Activated naive CD4-positive, alpha-beta T cell treated with anti-CD3 and anti-CD28 coated beads for 36 hours (primary cell): ENCODE measurements at regions of chr15 and their contacts with region 1.

Region 1: DNA sequence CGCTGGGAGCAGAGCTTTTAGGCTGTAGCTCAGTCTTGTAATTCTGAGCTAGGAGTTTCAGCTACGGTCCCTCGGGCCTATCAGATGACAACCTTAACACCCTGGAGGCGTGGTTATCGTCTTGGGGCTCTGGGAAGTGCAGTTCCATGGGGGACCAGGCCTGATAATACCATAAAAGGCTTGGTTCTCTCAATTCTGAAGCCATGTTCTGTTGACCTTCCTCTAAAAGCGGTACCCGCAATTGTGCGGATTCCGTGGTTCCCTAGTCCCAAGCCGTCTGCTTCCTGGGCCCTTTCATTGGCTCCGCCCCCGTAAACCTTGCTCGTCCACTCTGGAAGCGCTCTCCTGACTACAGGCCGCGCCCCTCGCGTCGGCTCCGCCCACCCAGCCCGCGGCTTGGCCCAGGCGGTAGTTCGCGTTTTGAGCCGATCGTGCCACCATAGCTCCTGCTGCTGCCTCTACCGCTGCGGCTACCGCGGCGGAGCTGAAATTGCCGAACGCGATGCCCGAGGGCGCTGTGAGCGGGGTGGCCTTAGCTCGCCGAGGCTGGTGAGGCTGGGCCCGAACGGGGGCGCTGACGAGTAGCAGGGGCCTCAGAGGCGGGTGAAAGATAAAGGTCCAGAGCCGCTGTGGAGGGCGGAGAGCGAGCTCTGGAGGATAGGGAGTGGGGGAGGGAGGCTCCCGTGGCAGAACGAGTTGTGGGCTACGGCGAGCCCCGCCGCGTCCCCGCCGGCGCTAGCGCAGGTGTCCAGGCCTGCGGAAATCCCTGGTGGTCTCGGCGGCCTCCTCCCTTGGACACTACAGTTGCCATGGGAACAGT is at the start of gene MAPKBP1:
- DNase-seq: peak; percentile 98
- H3K4me3 Mint-ChIP-seq: peak within 1 kb of the TSS; percentile 85
- H3K27ac Mint-ChIP-seq: peak within 1 kb of the TSS; percentile 91
- H3K4me1 Mint-ChIP-seq: peaks cover 56% of the 10 kb centered on the region
- H3K27me3 Mint-ChIP-seq: no peaks in the 10 kb centered on the region
- total RNA-seq, gene MAPKBP1: 13.8 to 13.9 TPM

Region 2: GRCh38 chr15:41557673-41558399 is 216.4 kb before region 1 on chr15:
- CTCF ChIA-PET with region 1: interaction called, 7 read pairs
- intact Hi-C with region 1: loop called (anchors 1 kb)
- DNase-seq: peak; percentile 79
- H3K4me3 Mint-ChIP-seq: peak overlapping the region; percentile 87
- H3K27ac Mint-ChIP-seq: no peak overlapping the region
- H3K4me1 Mint-ChIP-seq: peaks cover 13% of the 10 kb centered on the region
- H3K27me3 Mint-ChIP-seq: peaks cover 15% of the 10 kb centered on the region

Region 3: GRCh38 chr15:41695750-41696426 is 78.4 kb before region 1 on chr15:
- CTCF ChIA-PET with region 1: no interaction called
- intact Hi-C with region 1: loop called (anchors 1 kb)
- DNase-seq: peak; percentile 78
- H3K4me3 Mint-ChIP-seq: peak overlapping the region; percentile 22
- H3K27ac Mint-ChIP-seq: peak overlapping the region; percentile 76
- H3K4me1 Mint-ChIP-seq: peaks cover 48% of the 10 kb centered on the region
- H3K27me3 Mint-ChIP-seq: no peaks in the 10 kb centered on the region

Region 4: GRCh38 chr15:41811432-41812195 is 37.3 kb after region 1 on chr15:
- CTCF ChIA-PET with region 1: interaction called, 177 read pairs
- intact Hi-C with region 1: loop called (anchors 1 kb)
- DNase-seq: peak; percentile 85
- H3K4me3 Mint-ChIP-seq: no peak overlapping the region
- H3K27ac Mint-ChIP-seq: no peak overlapping the region
- H3K4me1 Mint-ChIP-seq: peaks cover 6% of the 10 kb centered on the region
- H3K27me3 Mint-ChIP-seq: no peaks in the 10 kb centered on the region

Region 5: DNA sequence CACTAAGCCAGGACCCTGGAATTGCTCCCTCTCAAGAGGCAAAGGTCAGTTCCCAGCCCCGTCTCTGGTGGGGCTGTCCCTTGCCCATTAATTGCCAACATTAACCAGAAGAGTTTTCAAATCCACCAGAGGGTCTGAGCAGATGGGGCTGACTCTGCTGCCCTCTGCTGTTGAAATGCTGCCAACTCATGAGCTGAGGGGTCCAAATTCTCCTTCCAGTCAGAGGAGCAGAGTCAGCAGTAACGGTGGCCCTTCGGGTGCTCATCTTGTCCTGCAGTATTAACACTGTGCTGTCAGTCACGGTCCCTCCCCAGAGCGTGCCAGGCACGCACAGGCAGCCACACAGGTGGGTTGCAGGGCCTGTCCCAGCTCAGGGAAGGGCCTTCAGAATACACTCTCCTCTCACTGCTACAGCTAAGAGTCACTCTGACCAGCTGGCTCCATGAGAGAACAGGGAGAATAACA is 130.3 kb after region 1 on chr15:
- CTCF ChIA-PET with region 1: interaction called, 26 read pairs
- intact Hi-C with region 1: loop called (anchors 1 kb)
- DNase-seq: peak; percentile 82
- H3K4me3 Mint-ChIP-seq: no peak overlapping the region
- H3K27ac Mint-ChIP-seq: no peak overlapping the region
- H3K4me1 Mint-ChIP-seq: peaks cover 11% of the 10 kb centered on the region
- H3K27me3 Mint-ChIP-seq: no peaks in the 10 kb centered on the region

Region 6: DNA sequence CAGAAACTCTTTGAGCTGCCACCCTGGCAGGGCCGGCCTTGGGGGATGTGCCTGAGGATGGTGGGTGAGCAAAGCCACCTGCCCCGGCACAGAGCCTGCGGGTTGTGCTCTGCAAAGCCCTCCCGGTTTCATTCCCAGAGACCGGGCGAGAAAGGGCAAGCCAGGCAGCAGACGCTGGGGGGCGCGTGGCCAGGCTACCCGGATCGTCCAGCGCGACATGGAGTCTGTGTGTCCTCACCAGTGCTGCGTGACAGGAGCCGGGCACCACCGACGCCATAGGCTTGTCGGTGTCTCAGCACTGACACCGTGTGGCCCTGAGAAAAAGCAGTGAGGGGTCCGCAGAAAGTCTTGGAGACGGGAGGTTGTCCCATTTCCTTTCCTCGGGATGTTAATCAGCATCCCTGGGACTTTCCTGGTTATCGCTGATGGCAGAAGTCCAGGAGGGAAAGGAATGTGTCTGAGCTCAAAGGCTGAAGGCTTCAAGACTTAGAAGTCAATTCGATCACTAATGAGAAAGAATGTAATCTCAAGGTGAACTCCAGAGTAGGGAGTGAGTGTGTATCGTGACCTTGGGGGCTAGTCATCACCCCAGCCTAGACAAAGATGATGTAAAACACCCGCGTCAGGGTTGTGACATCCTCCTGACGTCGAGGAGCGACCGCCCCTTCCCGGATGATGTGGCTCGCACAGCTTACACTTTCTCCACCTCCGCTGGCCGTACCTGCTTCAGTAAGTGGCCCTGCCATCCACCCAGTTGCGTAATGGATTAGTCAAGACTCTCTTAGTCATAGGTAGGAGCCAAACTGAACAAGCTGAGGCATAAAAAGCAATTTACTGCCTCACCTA is 282.9 kb after region 1 on chr15:
- CTCF ChIA-PET with region 1: interaction called, 3 read pairs
- intact Hi-C with region 1: loop called (anchors 1 kb)
- DNase-seq: peak; percentile 73
- H3K4me3 Mint-ChIP-seq: peak overlapping the region; percentile 33
- H3K27ac Mint-ChIP-seq: no peak overlapping the region
- H3K4me1 Mint-ChIP-seq: peaks cover 13% of the 10 kb centered on the region
- H3K27me3 Mint-ChIP-seq: peaks cover 20% of the 10 kb centered on the region